ENCODE measurements at regions of chr19 and their contacts with region 1.

Region 1: DNA sequence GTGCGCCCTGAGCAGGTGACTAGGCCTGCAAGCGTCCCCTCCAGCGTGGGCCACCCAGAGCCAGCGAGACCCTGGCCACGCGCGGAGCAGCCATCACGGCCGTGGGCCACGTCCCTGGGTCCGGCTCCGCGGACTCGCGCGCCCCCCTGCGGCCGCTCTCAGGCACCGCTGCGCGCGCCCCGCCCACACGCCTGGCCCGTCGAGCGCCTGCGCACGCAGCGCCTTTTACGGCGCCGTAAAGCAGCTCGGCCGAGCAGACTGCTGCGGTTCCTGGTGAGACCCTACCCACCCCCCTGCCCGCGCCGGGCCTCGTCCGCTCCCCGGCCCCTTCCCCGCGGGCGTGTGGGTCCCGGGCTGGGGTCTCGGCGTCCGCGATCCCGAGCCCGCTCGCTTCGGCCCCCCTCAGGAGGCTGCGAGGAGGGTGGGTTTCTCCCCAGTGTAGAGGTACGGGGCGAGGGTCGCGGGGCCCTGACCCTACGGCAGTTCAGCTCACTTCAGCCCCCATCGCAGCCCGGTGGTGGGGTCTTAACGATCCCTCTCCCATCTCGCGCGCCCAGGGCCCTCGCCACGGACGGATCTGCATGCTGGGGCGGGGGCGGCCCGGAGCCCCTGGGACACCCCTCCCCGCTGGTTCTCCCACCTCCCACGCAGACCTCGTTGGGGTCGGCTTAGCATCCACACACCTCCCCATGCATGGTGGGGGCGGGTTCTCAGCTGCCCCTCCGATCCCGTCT is at the start of gene TRAPPC5:
- DNase-seq: peak; percentile 90 to 96
- ATAC-seq: peak; percentile 96
- H3K4me3 ChIP-seq: peak within 1 kb of the TSS; percentile 82 to 95
- H3K27ac ChIP-seq: no peak within 1 kb of the TSS
- H3K4me1 ChIP-seq: no peaks in the 10 kb centered on the region
- H3K27me3 ChIP-seq: no peaks in the 10 kb centered on the region
- total RNA-seq, gene TRAPPC5: 54.0 to 60.1 TPM

Region 2: DNA sequence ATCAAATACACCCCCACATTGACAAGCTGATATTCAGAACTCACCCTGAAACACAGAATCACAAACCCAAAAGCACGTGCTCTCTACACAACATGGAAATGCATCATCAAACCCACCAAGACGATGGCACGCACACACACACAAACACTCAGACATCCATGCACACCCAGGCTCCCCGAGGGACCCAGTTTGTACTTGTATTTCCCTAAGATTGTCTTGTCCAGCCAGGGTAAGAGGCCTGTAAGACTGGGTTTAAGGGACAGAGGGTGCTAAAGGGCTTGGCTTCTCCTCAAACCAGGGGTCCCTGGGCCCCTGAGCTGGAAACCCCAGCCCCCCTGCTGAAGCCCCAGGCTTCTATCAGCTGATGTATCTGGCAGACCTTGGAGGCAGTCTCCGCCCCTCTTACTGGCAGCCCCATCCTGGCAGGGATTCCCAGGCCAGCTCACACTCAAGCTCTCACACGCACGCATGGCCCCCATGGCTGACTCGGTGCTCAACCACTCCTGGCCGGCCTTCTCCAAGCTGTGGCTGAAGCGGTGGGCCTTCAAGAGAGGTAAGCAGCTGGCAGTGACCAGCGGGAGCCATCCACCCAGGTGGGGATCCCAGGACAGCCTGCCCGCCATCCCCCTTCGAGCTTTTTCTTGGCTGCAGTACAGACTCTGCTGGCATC is 325.5 kb before region 1 on chr19:
- intact Hi-C with region 1: loop called (anchors 2 to 5 kb)
- DNase-seq: peak in 1 of 2 donors; percentile 66
- ATAC-seq: peak; percentile 45
- H3K4me3 ChIP-seq: no peak overlapping the region
- H3K27ac ChIP-seq: no peak overlapping the region
- H3K4me1 ChIP-seq: no peaks in the 10 kb centered on the region
- H3K27me3 ChIP-seq: no peaks in the 10 kb centered on the region

Region 3: DNA sequence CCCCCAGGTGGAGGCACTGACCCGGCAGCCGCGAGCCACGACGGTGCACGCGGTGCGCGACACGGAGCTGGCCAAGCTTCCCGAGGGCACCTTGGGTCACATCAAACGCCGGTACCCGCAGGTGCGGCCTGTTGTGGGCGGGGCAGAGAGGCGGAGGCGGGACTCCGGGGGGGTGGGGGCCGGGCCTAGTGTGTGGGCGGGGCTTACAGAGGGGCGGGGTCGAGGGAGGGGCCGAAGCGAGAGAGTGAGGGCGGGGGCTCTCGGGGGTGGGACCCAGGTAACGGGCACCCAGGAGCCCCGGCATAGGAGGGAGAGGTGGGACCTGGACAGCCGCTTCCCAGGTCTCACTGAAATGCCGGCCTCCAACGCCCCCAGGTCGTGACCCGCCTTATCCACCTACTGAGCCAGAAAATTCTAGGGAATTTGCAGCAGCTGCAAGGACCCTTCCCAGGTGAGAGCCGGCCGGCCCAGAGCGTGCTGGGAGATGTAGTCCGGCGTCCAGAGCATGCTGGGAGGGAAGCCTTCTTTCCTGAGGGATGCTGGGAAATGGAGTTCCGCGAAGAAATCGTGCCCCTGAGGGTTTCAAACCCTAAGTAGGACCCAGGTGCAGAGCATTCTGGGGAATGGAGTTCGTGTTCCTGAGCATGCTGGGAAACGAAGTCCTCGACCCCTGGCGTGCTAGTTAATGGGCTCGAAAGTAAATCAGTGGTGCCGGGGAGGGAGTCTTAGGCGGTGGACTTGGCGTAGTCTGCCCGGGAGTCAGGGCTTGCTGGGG is 129.6 kb before region 1 on chr19:
- intact Hi-C with region 1: loop called in 1 of 2 experiments (anchors 10 kb)
- DNase-seq: peak; percentile 65 to 84
- ATAC-seq: peak; percentile 80
- H3K4me3 ChIP-seq: no peak overlapping the region
- H3K27ac ChIP-seq: no peak overlapping the region
- H3K4me1 ChIP-seq: no peaks in the 10 kb centered on the region
- H3K27me3 ChIP-seq: no peaks in the 10 kb centered on the region

Region 4: DNA sequence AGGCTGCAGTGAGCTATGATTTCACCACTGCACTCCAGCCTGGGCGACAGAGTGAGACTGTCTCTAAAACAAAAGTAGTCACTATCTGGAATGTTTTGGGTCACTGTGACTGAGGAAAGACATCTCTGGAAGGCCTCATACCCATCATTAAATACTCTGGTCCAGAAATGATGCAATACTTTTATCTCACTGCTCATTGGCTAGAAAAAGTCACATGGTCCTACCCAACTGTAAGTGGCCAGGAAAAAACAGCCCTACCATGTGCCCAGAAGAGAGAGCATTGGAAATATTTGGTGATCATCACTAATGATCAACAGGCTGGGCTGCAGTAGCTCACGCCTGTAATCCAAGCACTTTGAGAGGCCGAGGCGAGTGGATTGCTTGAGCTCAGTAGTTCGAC is 115.4 kb before region 1 on chr19:
- intact Hi-C with region 1: loop called in 1 of 2 experiments (anchors 5 kb)
- DNase-seq: no peak
- ATAC-seq: no peak
- H3K4me3 ChIP-seq: no peak overlapping the region
- H3K27ac ChIP-seq: no peak overlapping the region
- H3K4me1 ChIP-seq: no peaks in the 10 kb centered on the region
- H3K27me3 ChIP-seq: no peaks in the 10 kb centered on the region

Region 5: GRCh38 chr19:7629347-7630054 is 51.3 kb before region 1 on chr19 and contains the starts of genes PET100 and XAB2:
- intact Hi-C with region 1: loop called in 1 of 2 experiments (anchors 2 kb)
- DNase-seq: peak; percentile 96 to 97
- ATAC-seq: peak; percentile 96
- H3K4me3 ChIP-seq: peak within 1 kb of the TSS; percentile 87 to 88
- H3K27ac ChIP-seq: peak within 1 kb of the TSS in 1 of 2 donors; percentile 20
- H3K4me1 ChIP-seq: peaks cover 0 to 3% of the 10 kb centered on the region in 2 donors
- H3K27me3 ChIP-seq: no peaks in the 10 kb centered on the region
- total RNA-seq, gene PET100: 81.2 to 95.7 TPM
- total RNA-seq, gene XAB2: 25.4 to 34.1 TPM

Region 6: GRCh38 chr19:7652061-7652641 is 28.6 kb before region 1 on chr19:
- intact Hi-C with region 1: loop called (anchors 1 to 2 kb)
- DNase-seq: peak; percentile 86 to 95
- ATAC-seq: peak; percentile 88
- H3K4me3 ChIP-seq: no peak overlapping the region
- H3K27ac ChIP-seq: no peak overlapping the region
- H3K4me1 ChIP-seq: no peaks in the 10 kb centered on the region
- H3K27me3 ChIP-seq: no peaks in the 10 kb centered on the region

Region 7: DNA sequence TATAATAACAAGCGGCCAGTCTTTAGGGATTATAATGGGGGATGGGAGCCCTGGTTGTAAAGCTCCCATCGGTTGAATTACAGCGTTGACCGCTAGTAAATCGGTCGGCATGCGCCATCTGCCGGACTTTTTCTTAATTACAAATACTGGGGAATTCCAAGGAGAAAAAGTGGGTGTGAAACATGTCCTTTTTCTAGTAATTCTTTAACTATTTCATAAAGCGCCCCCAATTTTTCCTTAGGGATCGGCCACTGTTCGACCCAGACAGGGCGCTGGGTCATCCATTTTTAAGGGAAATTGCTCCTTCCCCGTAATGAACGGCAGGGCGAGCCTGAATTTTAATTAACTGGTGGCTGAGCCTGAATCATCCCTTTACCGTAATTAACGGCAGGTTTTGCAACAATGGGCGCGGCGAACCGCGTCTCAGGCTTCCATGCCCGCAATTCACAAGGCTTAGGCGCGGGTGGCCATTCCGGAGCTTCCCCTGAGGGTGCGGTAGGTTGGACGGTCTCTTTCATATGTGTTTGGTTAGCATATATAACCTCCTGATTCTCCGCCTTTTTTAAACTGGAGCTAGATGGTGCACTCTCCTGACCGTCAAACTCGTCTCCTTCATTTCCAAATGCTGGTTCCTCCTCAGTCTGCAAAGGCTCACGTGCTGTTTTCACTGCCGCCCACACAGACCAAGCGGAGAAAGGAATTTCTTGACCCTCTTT is 119.0 kb after region 1 on chr19:
- intact Hi-C with region 1: loop called in 1 of 2 experiments (anchors 10 kb)
- DNase-seq: peak; percentile 61 to 83
- ATAC-seq: no peak
- H3K4me3 ChIP-seq: no peak overlapping the region
- H3K27ac ChIP-seq: no peak overlapping the region
- H3K4me1 ChIP-seq: no peaks in the 10 kb centered on the region
- H3K27me3 ChIP-seq: no peaks in the 10 kb centered on the region

Measured in aorta (tissue), 5 donors.